Mucosa of descending colon (tissue), 3 donors: ENCODE measurements at regions of chr4 and their contacts with region 1.

Region 1: DNA sequence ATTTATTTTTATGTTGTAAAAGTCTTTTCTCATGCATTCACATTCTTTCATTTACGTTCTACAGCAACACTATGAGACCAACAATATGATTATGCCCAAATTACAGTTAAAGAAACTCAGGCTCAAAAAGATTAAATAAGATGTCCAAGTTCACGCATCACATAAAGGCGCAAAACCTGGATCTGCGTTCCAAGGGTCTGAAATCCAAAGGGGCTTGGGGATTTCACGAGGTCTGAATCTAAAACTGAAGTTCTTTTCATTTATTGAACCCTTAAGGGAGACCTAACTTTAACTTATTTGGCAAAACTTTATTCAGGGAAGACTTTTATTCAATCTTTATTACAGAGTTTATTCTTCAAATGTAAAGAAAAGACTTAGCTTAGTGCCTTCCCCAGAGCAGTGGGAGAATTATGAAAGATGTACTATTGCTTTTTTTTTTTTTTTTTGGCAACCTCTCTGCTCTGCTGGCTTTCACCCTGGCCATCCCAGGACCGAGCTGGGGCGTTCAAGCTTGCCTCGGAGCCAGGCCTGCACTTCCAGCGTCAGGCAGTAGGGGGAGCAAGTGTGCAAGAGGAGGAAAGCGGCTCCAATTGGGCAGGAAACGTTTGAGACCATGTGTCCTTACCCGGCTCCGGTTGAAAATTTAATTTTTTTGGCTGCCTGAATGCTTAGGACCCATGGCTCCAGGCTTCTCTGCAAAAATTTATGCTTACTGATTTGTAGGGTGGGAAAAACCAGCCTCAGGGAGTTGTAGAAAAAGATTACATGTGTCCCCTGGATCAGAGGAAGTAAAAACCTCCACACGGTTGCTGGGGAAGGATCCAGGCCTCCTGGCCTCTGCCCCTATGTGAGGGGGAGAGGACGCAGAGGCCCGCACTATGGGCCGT is 344.3 kb upstream of the KLF3 start:
- DNase-seq: peak; percentile 94 to 99 (median 99)
- ATAC-seq: peak; percentile 89
- H3K4me3 ChIP-seq: peak overlapping the region; percentile 9
- H3K4me1 ChIP-seq: peaks cover 28% of the 10 kb centered on the region
- CTCF ChIP-seq: peak; percentile 99

Region 2: DNA sequence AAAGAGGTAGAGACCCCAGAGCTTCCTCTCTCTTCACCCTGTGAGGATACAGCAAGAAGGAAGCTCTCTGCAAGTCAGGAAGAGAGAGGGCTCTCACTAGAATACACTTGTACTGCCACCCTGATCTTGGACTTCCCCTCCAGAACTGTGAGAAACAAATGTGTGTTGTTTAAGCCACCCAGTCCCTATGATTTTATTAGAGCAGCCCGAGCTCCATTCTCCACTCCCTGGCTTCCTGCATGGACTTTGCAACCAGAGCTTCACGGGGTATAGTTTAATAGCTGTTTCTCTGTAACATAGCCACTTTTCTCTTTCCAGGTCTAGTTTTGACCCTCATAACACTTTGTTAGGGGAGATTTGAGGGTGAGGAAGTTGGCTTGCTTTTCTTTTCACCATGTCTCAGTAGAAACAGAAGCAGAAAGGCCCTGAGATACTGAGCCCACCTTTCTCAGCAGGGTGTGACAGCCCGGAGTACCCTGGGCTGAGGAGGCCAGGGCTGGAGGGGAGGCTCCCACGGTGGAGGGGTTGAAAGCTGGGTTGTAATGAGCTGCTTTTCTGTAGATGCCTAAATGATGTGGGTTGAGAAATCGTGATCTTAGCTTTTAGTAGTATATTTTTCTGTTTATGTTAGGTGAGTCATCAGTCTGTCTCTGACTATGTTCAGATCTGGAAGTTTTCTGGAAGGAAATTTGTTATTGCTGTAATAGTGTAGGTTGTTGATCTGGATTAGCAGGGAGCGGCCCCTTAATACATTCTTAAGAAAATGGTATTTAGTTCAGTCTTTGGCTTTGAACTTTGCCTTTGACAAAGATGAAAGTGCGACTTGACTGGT is 240.9 kb before region 1 on chr4:
- intact Hi-C with region 1: no loop called
- DNase-seq: peak in 1 of 3 donors; percentile 73
- ATAC-seq: peak; percentile 89
- H3K4me3 ChIP-seq: no peak overlapping the region
- H3K4me1 ChIP-seq: peaks cover 22% of the 10 kb centered on the region
- CTCF ChIP-seq: no peak

Region 3: DNA sequence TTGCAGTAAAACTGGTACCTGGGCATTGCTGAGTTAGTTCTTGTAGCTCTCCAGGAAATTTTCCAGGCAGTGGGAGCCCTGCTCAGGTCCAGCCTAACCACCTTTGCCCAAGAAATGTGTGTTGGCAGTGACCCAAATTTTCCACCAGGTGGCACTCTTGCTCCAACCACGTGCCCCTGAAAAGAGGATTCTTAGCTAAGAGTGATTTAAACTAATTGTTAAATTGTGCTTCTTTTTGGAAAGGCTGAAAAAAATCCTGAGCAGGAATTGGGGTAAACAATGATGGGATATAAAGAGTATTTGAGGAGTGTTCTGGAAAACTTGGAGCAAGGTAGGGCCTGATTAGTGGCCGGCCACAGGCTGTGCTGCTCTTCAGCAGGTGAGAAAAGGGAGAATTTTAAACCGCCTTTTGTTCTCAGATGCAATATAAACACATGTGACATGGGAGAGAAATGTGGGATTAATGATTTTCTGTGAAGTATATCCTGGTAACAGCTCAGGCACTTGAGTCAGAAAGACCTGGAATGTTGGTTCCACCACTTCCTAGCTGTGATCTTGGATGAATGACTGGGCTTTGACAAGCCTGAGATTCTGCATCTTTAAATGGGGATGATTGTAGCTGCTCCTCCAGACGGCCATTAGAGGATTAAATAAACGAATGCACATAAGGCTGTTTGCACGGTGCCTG is 139.9 kb before region 1 on chr4:
- intact Hi-C with region 1: loop called (anchors 5 to 10 kb)
- DNase-seq: peak; percentile 69 to 89 (median 85)
- ATAC-seq: peak; percentile 89
- H3K4me3 ChIP-seq: no peak overlapping the region
- H3K4me1 ChIP-seq: peaks cover 16% of the 10 kb centered on the region
- CTCF ChIP-seq: peak; percentile 87

Region 4: GRCh38 chr4:38396845-38397547 is 77.3 kb after region 1 on chr4:
- intact Hi-C with region 1: no loop called
- DNase-seq: no peak
- ATAC-seq: no peak
- H3K4me3 ChIP-seq: no peak overlapping the region
- H3K4me1 ChIP-seq: no peaks in the 10 kb centered on the region
- CTCF ChIP-seq: no peak

Region 5: GRCh38 chr4:38574559-38575333 is 255.0 kb after region 1 on chr4:
- intact Hi-C with region 1: loop called in 1 of 2 experiments (anchors 10 kb)
- DNase-seq: peak; percentile 49 to 68 (median 67)
- ATAC-seq: peak; percentile 85
- H3K4me3 ChIP-seq: no peak overlapping the region
- H3K4me1 ChIP-seq: peaks cover 34% of the 10 kb centered on the region
- CTCF ChIP-seq: no peak

Region 6: DNA sequence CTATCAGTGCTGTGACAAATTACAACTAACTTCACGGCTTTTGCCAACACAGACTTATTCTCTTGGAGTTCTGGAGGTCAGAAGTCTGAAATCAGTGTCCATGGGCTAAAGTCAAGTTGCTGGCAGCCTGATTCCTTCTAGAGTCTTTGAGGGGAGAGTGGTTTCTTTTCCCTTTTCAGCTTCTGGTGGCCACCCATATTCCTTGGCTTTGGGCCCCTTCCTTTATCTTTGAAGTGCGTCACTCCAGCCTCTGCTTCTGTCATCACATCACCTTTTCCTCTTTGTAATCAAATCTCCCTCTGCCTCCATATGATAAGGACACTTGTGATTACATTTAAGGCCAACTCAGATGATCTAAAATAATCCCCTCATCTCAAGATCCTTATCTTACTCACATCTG is 556.9 kb after region 1 on chr4:
- intact Hi-C with region 1: no loop called
- DNase-seq: no peak
- ATAC-seq: no peak
- H3K4me3 ChIP-seq: no peak overlapping the region
- H3K4me1 ChIP-seq: peaks cover 13% of the 10 kb centered on the region
- CTCF ChIP-seq: no peak